ENCODE measurements at regions of chr13 and their contacts with region 1.

Region 1: GRCh38 chr13:59477011-59477410 is 686.7 kb downstream of the DIAPH3 start:
- DNase-seq: no peak
- ATAC-seq: peak in 2 of 8 donors; percentile 29 to 45
- H3K4me3 ChIP-seq: no peak overlapping the region
- H3K27ac ChIP-seq: peak overlapping the region in 6 of 10 donors; percentile 16 to 73 (median 42)
- H3K4me1 ChIP-seq: peaks cover 10 to 65% (median 31%) of the 10 kb centered on the region in 9 donors
- H3K27me3 ChIP-seq: no peaks in the 10 kb centered on the region
- CTCF ChIP-seq: peak; percentile 9 to 54 (median 34)

Region 2: DNA sequence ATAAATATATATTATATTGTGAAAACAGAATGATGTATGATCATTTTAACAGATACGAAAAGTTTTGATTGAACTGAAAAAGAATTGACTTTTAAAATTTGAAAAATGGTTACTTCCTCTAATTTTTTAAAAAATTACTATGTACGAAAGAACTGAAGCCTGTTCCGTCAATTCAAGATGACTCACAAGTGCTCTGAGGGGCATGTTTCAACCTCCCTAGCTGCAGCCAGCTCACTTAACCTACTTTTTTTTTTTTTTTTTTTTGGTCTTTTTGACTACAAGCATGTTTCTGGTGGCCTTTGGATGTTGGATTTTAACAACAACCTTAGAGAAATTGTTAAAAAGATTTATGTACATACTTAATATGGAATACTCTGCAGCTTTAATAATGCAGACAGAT is 452.6 kb before region 1 on chr13:
- intact Hi-C with region 1: no loop called
- DNase-seq: no peak
- ATAC-seq: no peak
- H3K4me3 ChIP-seq: no peak overlapping the region
- H3K27ac ChIP-seq: no peak overlapping the region
- H3K4me1 ChIP-seq: no peaks in the 10 kb centered on the region
- H3K27me3 ChIP-seq: no peaks in the 10 kb centered on the region
- CTCF ChIP-seq: no peak

Region 3: DNA sequence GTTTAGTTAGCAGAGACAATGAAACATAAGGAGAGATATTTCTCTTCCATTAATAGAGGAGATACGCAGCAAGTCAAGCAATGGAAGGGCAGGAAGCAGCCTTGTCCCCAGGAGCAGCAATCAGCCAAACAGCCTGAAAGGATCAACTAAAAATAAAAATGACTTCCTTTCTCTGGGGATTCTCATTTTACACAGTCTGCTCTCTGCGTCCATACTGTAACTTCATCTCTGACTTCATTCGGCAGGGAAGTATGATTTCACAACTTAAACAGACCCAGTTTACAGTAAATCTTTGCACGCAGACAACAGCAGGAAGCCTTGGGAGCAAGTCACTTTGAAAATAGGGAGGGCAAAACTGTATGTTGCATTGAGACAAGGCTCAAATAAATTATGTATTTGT is 139.9 kb before region 1 on chr13:
- intact Hi-C with region 1: loop called in 1 of 10 experiments (anchors 10 kb)
- DNase-seq: peak in 1 of 2 donors; percentile 28
- ATAC-seq: peak in 7 of 8 donors; percentile 72 to 94 (median 87)
- H3K4me3 ChIP-seq: no peak overlapping the region
- H3K27ac ChIP-seq: peak overlapping the region in 6 of 10 donors; percentile 8 to 78 (median 66)
- H3K4me1 ChIP-seq: peaks cover under 1 to 44% (median 22%) of the 10 kb centered on the region in 9 donors
- H3K27me3 ChIP-seq: no peaks in the 10 kb centered on the region
- CTCF ChIP-seq: no peak